ENCODE measurements at regions of chr1 and their contacts with region 1.

Region 1: GRCh38 chr1:154398141-154398540 is 7.0 kb upstream of the IL6R start:
- DNase-seq: no peak
- ATAC-seq: no peak
- H3K4me3 ChIP-seq: no peak overlapping the region
- H3K27ac ChIP-seq: no peak overlapping the region
- H3K4me1 ChIP-seq: no peaks in the 10 kb centered on the region
- H3K27me3 ChIP-seq: no peaks in the 10 kb centered on the region
- CTCF ChIP-seq: no peak
- POLR2A ChIP-seq: no peak

Region 2: DNA sequence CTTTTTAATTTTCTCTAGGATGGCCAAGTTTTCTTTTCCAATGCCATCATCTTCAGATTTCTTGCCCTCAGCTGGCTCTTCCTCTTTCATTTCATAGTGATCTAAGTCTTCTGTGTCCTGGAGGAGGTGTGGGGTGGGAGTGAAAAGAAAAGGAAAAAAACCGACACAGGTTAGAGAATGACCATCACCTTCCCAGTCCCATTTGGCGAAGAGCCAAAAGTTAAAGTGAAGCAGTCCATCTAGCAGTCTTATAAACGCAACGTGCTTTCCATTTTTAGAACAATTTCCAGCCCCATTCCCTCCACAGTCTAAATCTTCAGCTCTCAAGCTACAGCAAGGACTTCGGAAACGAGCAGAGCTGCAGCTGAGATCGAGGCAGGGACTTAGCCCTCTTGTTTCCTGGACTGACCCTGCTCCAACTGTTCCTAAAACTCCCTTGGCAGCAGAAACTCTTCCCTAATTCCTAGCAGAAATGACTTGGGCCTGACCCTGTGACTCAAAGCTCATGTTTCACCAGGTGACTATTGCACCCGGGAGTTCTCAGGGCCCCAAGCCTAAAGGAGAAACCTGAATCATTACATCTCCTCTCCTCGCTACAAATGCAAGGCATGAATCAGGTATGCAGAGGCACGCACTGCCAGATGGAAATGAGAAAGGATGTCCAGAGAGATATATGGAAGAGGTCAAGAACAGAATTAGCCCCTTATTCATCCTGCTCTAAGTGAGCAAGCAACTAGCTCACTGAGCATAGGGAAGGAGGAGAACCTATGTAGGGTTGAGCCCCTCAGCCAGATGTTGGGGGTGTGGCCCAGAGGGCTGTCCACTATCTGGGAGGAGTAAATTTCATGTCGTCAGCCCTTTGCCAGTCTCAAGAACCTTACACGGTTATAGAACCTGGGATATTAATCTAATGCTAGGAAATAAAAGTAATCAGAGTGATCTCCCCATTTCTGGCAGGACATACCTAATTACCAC is 155.2 kb after region 1 on chr1:
- in situ Hi-C with region 1: no loop called
- intact Hi-C with region 1: loop called (anchors 1 kb)
- DNase-seq: peak; percentile 30 to 48
- ATAC-seq: peak; percentile 72
- H3K4me3 ChIP-seq: no peak overlapping the region
- H3K27ac ChIP-seq: peak overlapping the region; percentile 34 to 63 (median 59)
- H3K4me1 ChIP-seq: peaks cover 32 to 36% of the 10 kb centered on the region in 2 donors
- H3K27me3 ChIP-seq: no peaks in the 10 kb centered on the region
- CTCF ChIP-seq: no peak
- POLR2A ChIP-seq: no peak